A549 (cell line): ENCODE measurements at regions of chr12 and their contacts with region 1.

Region 1: GRCh38 chr12:7995266-7995963 is 37.1 kb upstream of the FOXJ2 start:
- DNase-seq: peak; percentile 52 to 90
- ATAC-seq: peak; percentile 100
- H3K4me3 ChIP-seq: no peak overlapping the region
- H3K27ac ChIP-seq: peak overlapping the region; percentile 4 to 73; a peak in 3 of 6 replicates
- H3K4me1 ChIP-seq: peaks cover 21% of the 10 kb centered on the region
- CTCF ChIP-seq: peak; percentile 83
- EP300 ChIP-seq: no peak
- POLR2A ChIP-seq: no peak
- RAD21 ChIP-seq: peak; percentile 91 to 92

Region 2: DNA sequence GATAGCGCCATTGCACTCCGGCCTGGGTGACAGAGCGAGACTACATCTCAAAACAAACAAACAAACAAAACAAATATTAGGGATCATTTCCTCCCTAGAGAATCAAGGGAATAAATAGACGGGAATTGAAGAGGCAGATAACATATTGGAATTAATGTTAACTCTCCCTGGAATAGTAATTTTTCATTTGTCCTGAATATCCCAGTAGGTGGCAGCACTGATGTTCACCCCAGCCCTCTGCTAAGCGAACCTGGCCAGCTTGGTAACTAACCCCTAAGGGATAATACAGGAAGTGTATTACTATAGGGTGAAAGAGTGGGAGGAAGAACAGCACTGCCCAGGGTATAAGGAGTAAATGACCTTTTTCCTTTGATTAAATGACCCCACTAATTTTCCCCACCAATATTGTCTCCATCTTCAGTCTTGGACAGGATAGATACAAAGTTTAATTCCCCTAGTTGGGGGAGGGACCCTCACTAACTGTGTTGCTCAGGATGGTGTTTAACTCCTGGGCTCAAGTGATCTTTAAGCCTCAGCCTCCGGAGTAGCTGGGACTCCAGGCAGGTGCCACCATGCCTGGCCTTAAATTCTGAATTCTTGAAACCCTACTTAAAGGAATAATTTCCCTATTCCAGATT is 163.2 kb before region 1 on chr12:
- CTCF ChIA-PET with region 1: interaction called, 14 read pairs
- POLR2A ChIA-PET with region 1: no interaction called
- DNase-seq: peak; percentile 69 to 83
- ATAC-seq: peak; percentile 93 to 96
- H3K4me3 ChIP-seq: no peak overlapping the region
- H3K27ac ChIP-seq: no peak overlapping the region
- H3K4me1 ChIP-seq: no peaks in the 10 kb centered on the region
- CTCF ChIP-seq: peak; percentile 67
- EP300 ChIP-seq: no peak
- POLR2A ChIP-seq: no peak
- RAD21 ChIP-seq: peak; percentile 56 to 59

Region 3: GRCh38 chr12:7859552-7859951 is 135.9 kb before region 1 on chr12:
- CTCF ChIA-PET with region 1: interaction called, 58 read pairs
- POLR2A ChIA-PET with region 1: no interaction called
- DNase-seq: no peak
- ATAC-seq: peak in 1 of 2 experiments; percentile 17; a peak in 3 of 6 replicates
- H3K4me3 ChIP-seq: no peak overlapping the region
- H3K27ac ChIP-seq: peak overlapping the region in 1 of 2 experiments; percentile 86; a peak in 2 of 6 replicates
- H3K4me1 ChIP-seq: peaks cover 14% of the 10 kb centered on the region
- CTCF ChIP-seq: no peak
- EP300 ChIP-seq: no peak
- POLR2A ChIP-seq: no peak
- RAD21 ChIP-seq: no peak

Region 4: DNA sequence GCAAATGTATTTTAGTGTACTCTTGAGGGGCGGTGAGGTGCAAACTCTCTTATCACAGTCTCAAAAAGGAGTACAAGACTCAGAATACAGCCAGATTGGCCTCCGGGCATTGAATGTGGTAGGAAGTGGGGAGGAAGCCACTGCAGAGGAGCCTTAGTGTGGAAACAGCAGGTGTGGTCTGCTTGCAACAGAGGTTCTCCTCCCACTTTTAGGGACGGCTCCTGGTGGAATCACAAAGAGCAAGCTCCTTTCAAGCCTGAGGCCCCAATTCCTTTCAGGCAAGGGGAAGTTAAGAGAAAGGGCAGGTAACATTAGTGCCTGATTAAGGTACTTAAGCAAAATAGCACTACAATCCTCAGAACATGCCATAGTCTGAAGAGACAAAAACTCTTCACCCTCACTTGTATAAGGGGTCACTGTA is 35.7 kb before region 1 on chr12:
- CTCF ChIA-PET with region 1: interaction called, 36 read pairs
- POLR2A ChIA-PET with region 1: no interaction called
- DNase-seq: no peak
- ATAC-seq: peak in 1 of 2 experiments; percentile 9; a peak in 1 of 6 replicates
- H3K4me3 ChIP-seq: no peak overlapping the region; the same call in 2 of the 3 replicates
- H3K27ac ChIP-seq: peak overlapping the region; percentile 71 to 81; a peak in 5 of 6 replicates
- H3K4me1 ChIP-seq: peaks cover 20% of the 10 kb centered on the region
- CTCF ChIP-seq: no peak
- EP300 ChIP-seq: no peak
- POLR2A ChIP-seq: no peak
- RAD21 ChIP-seq: no peak

Region 5: DNA sequence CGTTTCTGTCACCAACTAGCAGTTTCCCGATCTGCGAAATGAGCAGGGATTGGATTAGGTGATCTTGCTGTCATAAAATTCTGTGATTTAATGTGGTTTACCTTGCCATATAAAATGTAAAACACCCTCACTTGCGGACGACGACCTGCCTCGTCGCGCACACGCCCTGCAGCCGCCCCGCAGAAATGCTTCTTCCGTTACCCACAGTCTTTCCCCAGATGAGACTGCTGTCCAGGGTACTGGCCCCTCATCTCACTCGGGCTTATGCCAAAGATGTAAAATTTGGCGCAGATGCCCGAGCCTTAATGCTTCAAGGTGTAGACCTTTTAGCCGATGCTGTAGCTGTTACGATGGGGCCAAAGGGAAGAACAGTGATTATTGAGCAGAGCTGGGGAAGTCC is 19.4 kb after region 1 on chr12:
- CTCF ChIA-PET with region 1: no interaction called
- POLR2A ChIA-PET with region 1: no interaction called
- DNase-seq: no peak
- ATAC-seq: no peak
- H3K4me3 ChIP-seq: no peak overlapping the region
- H3K27ac ChIP-seq: no peak overlapping the region
- H3K4me1 ChIP-seq: peaks cover 7% of the 10 kb centered on the region; the same call in 1 of the 3 replicates
- CTCF ChIP-seq: no peak
- EP300 ChIP-seq: no peak
- POLR2A ChIP-seq: no peak
- RAD21 ChIP-seq: no peak

Region 6: GRCh38 chr12:8065991-8066594 is 70.7 kb after region 1 on chr12 and contains the start of gene C3AR1:
- CTCF ChIA-PET with region 1: no interaction called
- POLR2A ChIA-PET with region 1: no interaction called
- DNase-seq: no peak
- ATAC-seq: no peak
- H3K4me3 ChIP-seq: no peak within 1 kb of the TSS
- H3K27ac ChIP-seq: no peak within 1 kb of the TSS
- H3K4me1 ChIP-seq: no peaks in the 10 kb centered on the region
- CTCF ChIP-seq: no peak
- EP300 ChIP-seq: no peak
- POLR2A ChIP-seq: no peak
- RAD21 ChIP-seq: no peak
- polyA plus RNA-seq, gene C3AR1: not detected in 2 replicates